A673 (cell line): ENCODE measurements at regions of chr2 and their contacts with region 1.

Region 1: GRCh38 chr2:222707689-222708525 is 36.4 kb downstream of the MOGAT1 start:
- DNase-seq: peak; percentile 81
- H3K4me3 ChIP-seq: no peak overlapping the region
- H3K27ac ChIP-seq: no peak overlapping the region
- H3K4me1 ChIP-seq: peaks cover 21% of the 10 kb centered on the region
- H3K27me3 ChIP-seq: no peaks in the 10 kb centered on the region
- CTCF ChIP-seq: peak; percentile 92

Region 2: GRCh38 chr2:222594679-222595078 is 113.2 kb before region 1 on chr2:
- CTCF ChIA-PET with region 1: no interaction called
- POLR2A ChIA-PET with region 1: no interaction called
- intact Hi-C with region 1: no loop called
- DNase-seq: no peak
- H3K4me3 ChIP-seq: no peak overlapping the region
- H3K27ac ChIP-seq: no peak overlapping the region
- H3K4me1 ChIP-seq: peaks cover 5% of the 10 kb centered on the region
- H3K27me3 ChIP-seq: no peaks in the 10 kb centered on the region
- CTCF ChIP-seq: no peak

Region 3: GRCh38 chr2:222860740-222861410 is 153.0 kb after region 1 on chr2 and contains the start of gene ACSL3:
- CTCF ChIA-PET with region 1: interaction called, 8 read pairs
- POLR2A ChIA-PET with region 1: no interaction called
- intact Hi-C with region 1: loop called (anchors 5 kb)
- DNase-seq: peak; percentile 98
- H3K4me3 ChIP-seq: peak within 1 kb of the TSS; percentile 89
- H3K27ac ChIP-seq: peak within 1 kb of the TSS; percentile 97
- H3K4me1 ChIP-seq: peaks cover 33% of the 10 kb centered on the region
- H3K27me3 ChIP-seq: no peaks in the 10 kb centered on the region
- CTCF ChIP-seq: no peak
- total RNA-seq, gene ACSL3: 155 and 163 TPM in 2 replicates

Region 4: DNA sequence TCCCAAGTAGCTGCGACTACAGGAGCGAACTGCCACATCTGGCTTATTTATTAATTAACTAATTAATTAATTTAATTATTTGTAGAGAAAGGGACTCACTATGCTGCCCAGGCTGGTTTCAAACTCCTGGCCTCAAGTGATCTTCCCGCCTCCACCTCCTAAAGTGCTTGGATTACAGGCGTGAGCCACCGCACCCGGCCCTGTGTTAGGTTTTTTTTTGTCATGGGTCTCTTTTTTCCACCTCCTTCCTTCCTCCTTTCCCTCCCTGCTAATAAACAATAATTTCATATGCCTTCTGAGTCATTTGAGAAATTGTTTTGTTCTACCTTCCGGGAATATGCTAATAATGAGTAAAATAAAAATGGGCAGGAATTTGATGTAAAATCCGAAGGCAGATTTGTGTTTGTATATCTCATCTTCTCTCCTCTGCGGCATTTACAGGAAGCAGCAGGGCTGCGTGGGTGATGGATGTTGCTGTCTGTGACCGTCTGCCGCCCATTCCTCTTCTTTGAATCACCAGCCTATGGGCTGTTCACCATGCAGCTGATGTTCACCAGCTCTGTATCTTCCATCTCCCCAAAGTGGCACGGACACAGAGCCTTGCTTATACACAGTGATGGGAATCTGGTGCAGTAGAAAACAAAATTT is 242.9 kb after region 1 on chr2:
- CTCF ChIA-PET with region 1: no interaction called
- POLR2A ChIA-PET with region 1: no interaction called
- intact Hi-C with region 1: loop called (anchors 5 kb)
- DNase-seq: peak; percentile 55
- H3K4me3 ChIP-seq: no peak overlapping the region
- H3K27ac ChIP-seq: no peak overlapping the region
- H3K4me1 ChIP-seq: peaks cover 8% of the 10 kb centered on the region
- H3K27me3 ChIP-seq: no peaks in the 10 kb centered on the region
- CTCF ChIP-seq: no peak